H1 (cell line): ENCODE measurements at regions of chr20 and their contacts with region 1.

Region 1: DNA sequence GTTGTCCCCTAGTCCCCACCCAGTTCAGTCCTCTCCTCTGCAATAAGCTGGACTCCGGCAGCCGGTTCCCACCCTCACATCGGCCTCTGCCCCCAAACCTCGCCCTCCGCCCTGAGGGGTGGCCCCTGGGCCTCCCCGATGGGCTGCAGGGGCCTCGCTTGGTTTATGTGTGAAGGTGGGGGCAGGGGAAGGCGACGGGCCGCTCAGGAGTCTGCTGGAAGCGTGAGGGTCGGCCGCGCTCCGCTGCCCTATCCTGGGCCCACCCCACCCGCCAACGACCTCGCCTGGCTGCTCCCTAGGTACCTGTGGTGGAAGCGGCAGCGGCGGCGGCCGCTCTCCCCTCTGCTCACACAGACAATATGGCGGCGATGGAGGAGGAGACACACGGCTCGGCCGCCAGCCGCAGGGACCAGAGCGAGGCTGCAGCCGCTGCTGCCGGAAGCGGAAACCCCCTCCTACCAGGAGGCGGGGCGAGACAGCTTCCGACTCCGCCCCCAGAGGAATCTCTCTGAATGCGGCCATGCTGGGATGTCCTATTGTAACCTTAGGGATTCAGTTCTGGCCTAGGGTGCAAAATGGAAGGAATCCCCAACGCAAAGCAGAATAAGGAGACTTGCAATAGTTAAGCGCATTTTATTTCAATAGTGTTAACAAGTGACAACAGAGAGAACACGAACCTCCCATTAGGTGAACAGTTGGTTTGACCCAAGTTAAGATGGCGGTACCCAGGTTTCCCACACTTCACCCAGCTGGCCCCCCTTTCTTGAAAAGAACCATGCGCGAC is at the start of gene CSNK2A1:
- DNase-seq: peak; percentile 86 to 96
- H3K4me3 ChIP-seq: peak within 1 kb of the TSS; percentile 89 to 95 (median 94)
- H3K27ac ChIP-seq: peak within 1 kb of the TSS; percentile 98
- H3K4me1 ChIP-seq: peaks cover 2 to 8% (median 2%) of the 10 kb centered on the region in 4 experiments; a peak in 6 of 7 replicates
- H3K27me3 ChIP-seq: peaks cover 3 to 16% (median 11%) of the 10 kb centered on the region in 4 experiments; a peak in 5 of 7 replicates
- CTCF ChIP-seq: no peak
- EP300 ChIP-seq: peak in 1 of 2 experiments; percentile 99; a peak in 2 of 3 replicates
- POLR2A ChIP-seq: peak; percentile 90 to 96
- RAD21 ChIP-seq: no peak
- total RNA-seq, gene CSNK2A1: 247 and 260 TPM in 2 replicates

Region 2: GRCh38 chr20:407133-407952 is 136.2 kb before region 1 on chr20:
- CTCF ChIA-PET with region 1: no interaction called
- POLR2A ChIA-PET with region 1: interaction called, 12 read pairs
- DNase-seq: peak; percentile 72 to 88
- H3K4me3 ChIP-seq: peak overlapping the region; percentile 65 to 99 (median 72)
- H3K27ac ChIP-seq: peak overlapping the region; percentile 45; the same call in 1 of the 2 replicates
- H3K4me1 ChIP-seq: peaks cover 0 to 10% (median 6%) of the 10 kb centered on the region in 4 experiments; a peak in 5 of 7 replicates
- H3K27me3 ChIP-seq: no peaks in the 10 kb centered on the region
- CTCF ChIP-seq: peak; percentile 17 to 58 (median 33)
- EP300 ChIP-seq: no peak
- POLR2A ChIP-seq: peak; percentile 60 to 76
- RAD21 ChIP-seq: peak; percentile 0 to 18; a peak in 1 of 4 replicates

Region 3: DNA sequence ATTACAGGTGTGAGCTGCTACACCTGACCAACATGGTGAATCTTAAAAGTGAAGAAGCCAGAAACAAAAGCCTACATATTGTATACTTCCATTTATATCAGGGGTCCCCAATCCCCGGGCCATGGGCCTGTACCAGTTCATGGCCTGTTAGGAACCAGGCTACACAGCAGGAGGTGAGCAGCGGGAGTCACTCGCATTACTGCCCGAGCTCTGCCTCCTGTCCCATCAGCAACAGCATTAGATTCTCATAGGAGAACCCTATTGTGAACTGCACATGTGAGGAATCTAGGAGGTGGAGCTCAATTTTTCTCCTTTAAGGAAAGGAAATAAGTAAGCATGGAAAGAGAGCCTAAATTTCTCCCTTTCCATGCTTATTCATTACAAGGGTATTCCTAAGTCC is 21.7 kb before region 1 on chr20:
- CTCF ChIA-PET with region 1: no interaction called
- POLR2A ChIA-PET with region 1: interaction called, 14 read pairs
- DNase-seq: no peak
- H3K4me3 ChIP-seq: no peak overlapping the region
- H3K27ac ChIP-seq: no peak overlapping the region
- H3K4me1 ChIP-seq: peaks cover 0 to 2% (median 0%) of the 10 kb centered on the region in 4 experiments; a peak in 2 of 7 replicates
- H3K27me3 ChIP-seq: no peaks in the 10 kb centered on the region
- CTCF ChIP-seq: no peak
- EP300 ChIP-seq: no peak
- POLR2A ChIP-seq: no peak
- RAD21 ChIP-seq: no peak

Region 4: DNA sequence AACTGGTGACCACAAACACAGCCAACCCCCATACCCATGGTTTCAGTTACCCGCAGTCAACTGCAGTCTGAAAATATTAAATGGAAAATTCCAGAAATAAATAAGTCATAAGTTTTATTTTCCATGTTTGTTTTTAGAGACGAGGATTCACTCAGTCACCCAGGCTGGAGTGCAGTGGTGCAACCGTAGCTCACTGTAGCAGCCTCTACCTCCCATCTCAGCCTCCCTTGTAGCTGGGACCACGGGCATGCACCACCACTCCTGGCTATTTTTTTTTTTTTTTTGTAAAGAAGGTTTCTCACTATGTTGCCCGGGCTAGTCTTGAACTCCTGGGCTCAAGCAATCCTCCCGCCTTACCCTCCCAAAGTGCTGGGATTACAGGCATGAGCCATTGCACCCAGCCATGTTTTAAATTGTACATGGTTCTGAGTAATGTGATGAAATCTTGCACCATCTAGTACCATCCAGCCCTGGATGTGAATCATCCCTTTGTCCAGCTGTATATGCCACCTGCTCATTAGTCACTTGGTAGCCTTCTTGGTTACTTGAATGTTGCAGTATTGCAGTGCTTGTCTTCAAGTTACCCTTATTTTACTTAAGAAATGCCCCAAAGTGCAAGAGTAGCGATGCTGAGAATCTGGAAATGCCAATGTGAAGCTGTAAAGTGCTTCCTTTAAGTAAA is 14.5 kb before region 1 on chr20:
- CTCF ChIA-PET with region 1: no interaction called
- POLR2A ChIA-PET with region 1: interaction called, 15 read pairs
- DNase-seq: no peak
- H3K4me3 ChIP-seq: no peak overlapping the region
- H3K27ac ChIP-seq: no peak overlapping the region
- H3K4me1 ChIP-seq: peaks cover 0 to 3% (median 0%) of the 10 kb centered on the region in 4 experiments; a peak in 2 of 7 replicates
- H3K27me3 ChIP-seq: no peaks in the 10 kb centered on the region
- CTCF ChIP-seq: no peak
- EP300 ChIP-seq: no peak
- POLR2A ChIP-seq: no peak; a peak in 1 of 3 replicates
- RAD21 ChIP-seq: no peak

Region 5: DNA sequence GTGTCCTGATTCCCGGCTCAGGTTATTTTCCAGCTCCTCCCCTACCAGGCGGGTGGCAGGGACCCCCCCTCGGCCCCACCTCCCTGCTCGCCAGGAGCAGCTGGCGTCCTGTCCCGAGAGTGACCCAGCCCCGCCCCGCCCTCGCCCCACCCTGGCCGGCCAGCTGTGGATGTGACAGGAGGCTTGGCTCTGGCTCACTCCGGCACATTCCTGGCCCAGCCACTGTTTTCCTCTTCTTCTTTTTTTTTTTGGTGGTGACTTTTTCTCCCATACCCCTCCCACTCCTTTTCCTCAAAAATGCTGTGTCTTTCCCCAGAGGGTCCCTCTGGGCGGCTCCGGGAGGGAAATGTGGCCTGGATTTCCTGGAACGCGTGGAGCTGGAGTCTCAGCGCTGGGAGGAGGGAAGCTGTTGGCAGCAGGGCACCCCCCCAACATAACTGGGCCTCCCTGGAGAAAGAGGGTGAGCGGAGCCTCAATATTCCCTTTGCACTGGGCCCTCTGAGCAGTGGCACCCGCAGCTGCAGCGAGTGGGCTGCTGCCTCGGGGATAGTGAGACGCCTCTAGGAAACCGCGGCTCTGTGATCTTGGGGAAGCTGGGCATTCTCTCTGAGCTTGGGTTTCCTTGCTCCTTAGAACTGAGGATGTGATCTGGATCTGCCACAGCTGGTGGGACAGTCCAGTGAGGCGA is 28.3 kb after region 1 on chr20:
- CTCF ChIA-PET with region 1: interaction called, 8 read pairs
- POLR2A ChIA-PET with region 1: interaction called, 24 read pairs
- DNase-seq: peak in 1 of 2 experiments; percentile 63
- H3K4me3 ChIP-seq: 0 out of 8 replicates have a peak overlapping the region, but pooled peaks of 1 of the 4 experiments have one; percentile 13
- H3K27ac ChIP-seq: no peak overlapping the region
- H3K4me1 ChIP-seq: peaks cover 13 to 34% (median 22%) of the 10 kb centered on the region in 4 experiments
- H3K27me3 ChIP-seq: peaks cover 0 to 11% (median 3%) of the 10 kb centered on the region in 4 experiments; a peak in 5 of 7 replicates
- CTCF ChIP-seq: no peak
- EP300 ChIP-seq: no peak
- POLR2A ChIP-seq: no peak
- RAD21 ChIP-seq: no peak